Heart left ventricle (tissue), 16 donors: ENCODE measurements at regions of chr19 and their contacts with region 1.

Region 1: GRCh38 chr19:16771618-16772017 is 52.0 kb downstream of the NWD1 start:
- DNase-seq: peak in 4 of 5 donors; percentile 69 to 84 (median 76)
- ATAC-seq: peak; percentile 71 to 88 (median 86)
- H3K4me3 ChIP-seq: no peak overlapping the region
- H3K27ac ChIP-seq: no peak overlapping the region
- H3K4me1 ChIP-seq: no peaks in the 10 kb centered on the region
- H3K27me3 ChIP-seq: no peaks in the 10 kb centered on the region
- CTCF ChIP-seq: peak; percentile 73 to 92 (median 84)
- POLR2A ChIP-seq: no peak

Region 2: GRCh38 chr19:16814526-16815100 is 43.0 kb after region 1 on chr19:
- intact Hi-C with region 1: loop called in 1 of 10 experiments (anchors 5 kb)
- DNase-seq: no peak
- ATAC-seq: no peak
- H3K4me3 ChIP-seq: no peak overlapping the region
- H3K27ac ChIP-seq: no peak overlapping the region
- H3K4me1 ChIP-seq: no peaks in the 10 kb centered on the region
- H3K27me3 ChIP-seq: peaks cover 0 to 4% (median 0%) of the 10 kb centered on the region in 9 donors
- CTCF ChIP-seq: no peak
- POLR2A ChIP-seq: no peak

Region 3: GRCh38 chr19:16829010-16829821 is 57.6 kb after region 1 on chr19 and contains the start of gene SIN3B:
- intact Hi-C with region 1: loop called in 2 of 10 experiments (anchors 5 kb)
- DNase-seq: peak; percentile 83 to 93 (median 86)
- ATAC-seq: peak; percentile 60 to 92 (median 90)
- H3K4me3 ChIP-seq: peak within 1 kb of the TSS; percentile 61 to 99 (median 78)
- H3K27ac ChIP-seq: peak within 1 kb of the TSS; percentile 53 to 91 (median 75)
- H3K4me1 ChIP-seq: peaks cover 0 to 46% (median 23%) of the 10 kb centered on the region in 12 donors
- H3K27me3 ChIP-seq: no peaks in the 10 kb centered on the region
- CTCF ChIP-seq: no peak
- POLR2A ChIP-seq: peak; percentile 28 to 67
- total RNA-seq, gene SIN3B: 15.2 to 36.6 (median 24.7) TPM

Region 4: DNA sequence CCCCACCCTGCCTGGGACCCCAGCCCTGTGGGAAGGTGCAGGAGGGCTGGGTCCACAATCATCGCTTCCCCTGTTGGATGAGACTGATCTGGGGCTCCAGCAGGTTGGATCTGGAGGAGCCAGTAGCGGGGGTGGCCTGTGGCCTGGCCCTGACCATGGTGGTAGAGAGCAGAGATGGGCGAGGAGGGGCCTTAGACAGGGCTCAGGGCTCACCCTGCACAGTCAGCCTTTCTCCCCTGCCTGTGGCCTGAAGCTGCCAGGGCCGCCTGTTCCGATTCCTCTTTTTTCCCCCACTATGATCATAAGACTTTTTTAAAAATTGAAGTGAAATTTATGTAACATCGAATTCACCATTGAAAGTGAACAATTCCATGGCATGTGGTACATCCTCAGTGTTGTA is 75.8 kb after region 1 on chr19:
- intact Hi-C with region 1: no loop called
- DNase-seq: no peak
- ATAC-seq: peak in 3 of 4 donors; percentile 35 to 44 (median 39)
- H3K4me3 ChIP-seq: no peak overlapping the region
- H3K27ac ChIP-seq: peak overlapping the region in 1 of 12 donors; percentile 55
- H3K4me1 ChIP-seq: peaks cover 0 to 9% (median 0%) of the 10 kb centered on the region in 12 donors
- H3K27me3 ChIP-seq: no peaks in the 10 kb centered on the region
- CTCF ChIP-seq: no peak
- POLR2A ChIP-seq: no peak